Ascending aorta (tissue), 2 donors: ENCODE measurements at regions of chr11 and their contacts with region 1.

Region 1: GRCh38 chr11:67288452-67289225 is 464 bp upstream of the ANKRD13D start:
- DNase-seq: peak; percentile 65 to 95
- H3K4me3 ChIP-seq: peak overlapping the region; percentile 76 to 87
- H3K27ac ChIP-seq: peak overlapping the region; percentile 91 to 98
- H3K4me1 ChIP-seq: peaks cover 14 to 38% of the 10 kb centered on the region in 2 donors
- H3K27me3 ChIP-seq: no peaks in the 10 kb centered on the region
- CTCF ChIP-seq: peak in 2 of 3 experiments; percentile 24 to 44

Region 2: GRCh38 chr11:67239783-67240575 is 48.7 kb before region 1 on chr11:
- intact Hi-C with region 1: loop called (anchors 2 kb)
- DNase-seq: peak; percentile 93 to 99
- H3K4me3 ChIP-seq: peak overlapping the region; percentile 77 to 79
- H3K27ac ChIP-seq: peak overlapping the region; percentile 94 to 96
- H3K4me1 ChIP-seq: peaks cover 7 to 29% of the 10 kb centered on the region in 2 donors
- H3K27me3 ChIP-seq: no peaks in the 10 kb centered on the region
- CTCF ChIP-seq: peak in 1 of 3 experiments; percentile 11

Region 3: GRCh38 chr11:67265633-67266423 is 22.8 kb before region 1 on chr11:
- intact Hi-C with region 1: loop called (anchors 1 kb)
- DNase-seq: peak in 1 of 2 donors; percentile 85
- H3K4me3 ChIP-seq: peak overlapping the region; percentile 23 to 39
- H3K27ac ChIP-seq: peak overlapping the region; percentile 73 to 80
- H3K4me1 ChIP-seq: peaks cover 39 to 41% of the 10 kb centered on the region in 2 donors
- H3K27me3 ChIP-seq: no peaks in the 10 kb centered on the region
- CTCF ChIP-seq: peak; percentile 61 to 95 (median 72)

Region 4: DNA sequence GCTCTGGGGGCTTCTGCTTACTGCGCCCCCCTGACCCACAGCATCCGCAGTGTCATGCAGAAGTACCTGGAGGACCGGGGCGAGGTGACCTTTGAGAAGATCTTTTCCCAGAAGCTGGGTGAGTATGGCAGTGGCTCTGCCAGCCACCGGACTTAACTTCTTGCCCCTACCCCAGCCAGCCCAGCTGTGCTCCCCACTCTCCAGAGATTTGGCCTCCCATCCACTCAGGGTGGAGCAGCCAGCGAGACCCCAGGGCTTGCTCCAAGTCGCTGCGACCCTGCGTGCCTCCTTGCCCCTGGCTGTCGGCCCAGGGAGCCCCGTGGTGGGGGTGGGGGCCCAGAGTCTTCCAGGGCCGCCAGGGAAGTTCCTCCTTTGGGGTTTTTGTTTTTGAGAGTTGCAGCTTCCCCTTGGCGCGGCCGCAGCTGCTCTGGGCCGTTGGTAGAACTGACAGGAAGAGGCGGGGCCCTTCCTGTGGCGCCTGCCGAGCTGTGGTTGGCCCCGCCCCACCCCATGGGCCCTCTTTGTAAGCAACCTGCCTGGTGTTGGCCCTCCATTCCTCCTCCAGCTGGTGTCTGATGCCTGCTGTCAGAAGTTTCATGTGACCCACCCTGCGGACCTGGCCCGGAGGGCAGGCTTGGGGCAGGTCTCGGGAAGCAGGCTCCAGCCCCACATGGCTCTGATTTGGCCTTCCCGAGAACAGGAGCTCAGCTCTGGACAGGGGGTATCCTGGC is 11.2 kb before region 1 on chr11:
- intact Hi-C with region 1: loop called (anchors 1 kb)
- DNase-seq: peak; percentile 79 to 95
- H3K4me3 ChIP-seq: peak overlapping the region; percentile 24 to 46
- H3K27ac ChIP-seq: peak overlapping the region; percentile 72 to 80
- H3K4me1 ChIP-seq: peaks cover 42 to 52% of the 10 kb centered on the region in 2 donors
- H3K27me3 ChIP-seq: no peaks in the 10 kb centered on the region
- CTCF ChIP-seq: no peak

Region 5: GRCh38 chr11:67303132-67303834 is 14.6 kb after region 1 on chr11 and contains the start of gene SSH3:
- intact Hi-C with region 1: loop called (anchors 2 kb)
- DNase-seq: peak in 1 of 2 donors; percentile 88
- H3K4me3 ChIP-seq: peak within 1 kb of the TSS; percentile 76 to 97
- H3K27ac ChIP-seq: peak within 1 kb of the TSS; percentile 68 to 72
- H3K4me1 ChIP-seq: peaks cover 9 to 18% of the 10 kb centered on the region in 2 donors
- H3K27me3 ChIP-seq: no peaks in the 10 kb centered on the region
- CTCF ChIP-seq: no peak
- total RNA-seq, gene SSH3: 30.9 TPM

Region 6: GRCh38 chr11:67317205-67317887 is 28.7 kb after region 1 on chr11:
- intact Hi-C with region 1: loop called (anchors 1 kb)
- DNase-seq: peak; percentile 83 to 98
- H3K4me3 ChIP-seq: peak overlapping the region; percentile 66 to 83
- H3K27ac ChIP-seq: peak overlapping the region; percentile 80 to 86
- H3K4me1 ChIP-seq: peaks cover 0 to 12% of the 10 kb centered on the region in 2 donors
- H3K27me3 ChIP-seq: no peaks in the 10 kb centered on the region
- CTCF ChIP-seq: peak; percentile 94 to 100 (median 97)